Aorta (tissue), 5 donors: ENCODE measurements at regions of chr15 and their contacts with region 1.

Region 1: DNA sequence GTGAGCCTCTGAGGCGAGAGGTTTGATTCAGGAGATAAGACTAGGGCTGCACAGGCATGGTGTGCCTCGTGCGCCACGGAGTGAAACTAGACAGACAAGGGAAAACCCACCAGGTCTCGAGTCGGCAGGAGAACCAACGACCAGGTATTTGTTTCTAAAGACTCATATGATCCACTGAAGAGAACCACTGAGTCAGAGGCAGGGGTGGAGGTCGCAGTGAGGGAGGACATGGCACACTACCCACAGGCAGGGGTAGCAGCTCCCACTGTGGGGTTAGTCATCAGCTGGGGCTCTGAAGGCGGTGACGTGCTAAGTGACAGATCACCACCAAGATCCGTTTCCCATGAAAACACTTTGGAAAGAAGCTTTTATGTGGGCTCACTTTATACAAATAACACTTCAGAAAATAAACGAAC is 45.7 kb downstream of the CHSY1 start:
- DNase-seq: no peak
- ATAC-seq: no peak
- H3K4me3 ChIP-seq: peak overlapping the region in 1 of 2 donors; percentile 41
- H3K27ac ChIP-seq: peak overlapping the region in 1 of 2 donors; percentile 57
- H3K4me1 ChIP-seq: peaks cover 1 to 7% of the 10 kb centered on the region in 2 donors
- H3K27me3 ChIP-seq: no peaks in the 10 kb centered on the region

Region 2: GRCh38 chr15:101221902-101222301 is 15.7 kb after region 1 on chr15:
- intact Hi-C with region 1: no loop called
- DNase-seq: no peak
- ATAC-seq: no peak
- H3K4me3 ChIP-seq: no peak overlapping the region
- H3K27ac ChIP-seq: no peak overlapping the region
- H3K4me1 ChIP-seq: peaks cover 0 to 2% of the 10 kb centered on the region in 2 donors
- H3K27me3 ChIP-seq: no peaks in the 10 kb centered on the region

Region 3: GRCh38 chr15:101246824-101247745 is 40.9 kb after region 1 on chr15:
- intact Hi-C with region 1: loop called in 1 of 2 experiments (anchors 5 kb)
- DNase-seq: no peak
- ATAC-seq: no peak
- H3K4me3 ChIP-seq: no peak overlapping the region
- H3K27ac ChIP-seq: peak overlapping the region; percentile 32 to 58
- H3K4me1 ChIP-seq: peaks cover 4 to 8% of the 10 kb centered on the region in 2 donors
- H3K27me3 ChIP-seq: no peaks in the 10 kb centered on the region